Activated CD8-positive, alpha-beta T cell treated with anti-CD3 and anti-CD28 coated beads, Interleukin-2, amount 10 ng/mL, durations not matched to agents 7 days and 5 days (primary cell): ENCODE measurements at regions of chr6 and their contacts with region 1.

Region 1: DNA sequence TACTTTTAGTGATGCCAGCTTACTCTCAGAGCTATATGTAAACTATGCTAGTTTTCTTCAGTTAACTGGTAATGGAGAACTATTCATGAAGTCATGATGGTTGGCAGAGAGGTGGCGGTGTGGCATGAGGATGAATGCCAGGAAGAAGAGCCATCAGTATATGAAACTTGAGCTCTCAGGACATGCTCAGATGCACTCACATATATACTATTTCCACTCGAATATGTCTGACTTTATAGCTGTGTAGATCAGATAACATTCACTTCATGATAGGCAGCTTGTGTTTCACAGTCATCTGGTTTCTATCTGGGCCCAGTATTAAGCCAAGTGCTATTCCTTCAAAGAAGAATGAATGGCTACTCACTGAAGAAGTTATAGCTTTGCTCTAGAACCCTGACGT is 46.2 kb upstream of the CEP85L start:
- DNase-seq: no peak
- ATAC-seq: no peak
- H3K4me3 Mint-ChIP-seq: no peak overlapping the region
- H3K27ac Mint-ChIP-seq: no peak overlapping the region
- H3K4me1 Mint-ChIP-seq: peaks cover 41% of the 10 kb centered on the region
- H3K27me3 Mint-ChIP-seq: no peaks in the 10 kb centered on the region

Region 2: GRCh38 chr6:118377711-118378414 is 319.7 kb before region 1 on chr6:
- CTCF ChIA-PET with region 1: no interaction called
- POLR2A ChIA-PET with region 1: no interaction called
- DNase-seq: no peak
- ATAC-seq: no peak
- H3K4me3 Mint-ChIP-seq: no peak overlapping the region
- H3K27ac Mint-ChIP-seq: no peak overlapping the region
- H3K4me1 Mint-ChIP-seq: no peaks in the 10 kb centered on the region
- H3K27me3 Mint-ChIP-seq: no peaks in the 10 kb centered on the region

Region 3: GRCh38 chr6:118618679-118619377 is 78.7 kb before region 1 on chr6:
- CTCF ChIA-PET with region 1: no interaction called
- POLR2A ChIA-PET with region 1: no interaction called
- DNase-seq: peak; percentile 67
- ATAC-seq: peak; percentile 84
- H3K4me3 Mint-ChIP-seq: no peak overlapping the region
- H3K27ac Mint-ChIP-seq: no peak overlapping the region
- H3K4me1 Mint-ChIP-seq: peaks cover 12% of the 10 kb centered on the region
- H3K27me3 Mint-ChIP-seq: no peaks in the 10 kb centered on the region

Region 4: DNA sequence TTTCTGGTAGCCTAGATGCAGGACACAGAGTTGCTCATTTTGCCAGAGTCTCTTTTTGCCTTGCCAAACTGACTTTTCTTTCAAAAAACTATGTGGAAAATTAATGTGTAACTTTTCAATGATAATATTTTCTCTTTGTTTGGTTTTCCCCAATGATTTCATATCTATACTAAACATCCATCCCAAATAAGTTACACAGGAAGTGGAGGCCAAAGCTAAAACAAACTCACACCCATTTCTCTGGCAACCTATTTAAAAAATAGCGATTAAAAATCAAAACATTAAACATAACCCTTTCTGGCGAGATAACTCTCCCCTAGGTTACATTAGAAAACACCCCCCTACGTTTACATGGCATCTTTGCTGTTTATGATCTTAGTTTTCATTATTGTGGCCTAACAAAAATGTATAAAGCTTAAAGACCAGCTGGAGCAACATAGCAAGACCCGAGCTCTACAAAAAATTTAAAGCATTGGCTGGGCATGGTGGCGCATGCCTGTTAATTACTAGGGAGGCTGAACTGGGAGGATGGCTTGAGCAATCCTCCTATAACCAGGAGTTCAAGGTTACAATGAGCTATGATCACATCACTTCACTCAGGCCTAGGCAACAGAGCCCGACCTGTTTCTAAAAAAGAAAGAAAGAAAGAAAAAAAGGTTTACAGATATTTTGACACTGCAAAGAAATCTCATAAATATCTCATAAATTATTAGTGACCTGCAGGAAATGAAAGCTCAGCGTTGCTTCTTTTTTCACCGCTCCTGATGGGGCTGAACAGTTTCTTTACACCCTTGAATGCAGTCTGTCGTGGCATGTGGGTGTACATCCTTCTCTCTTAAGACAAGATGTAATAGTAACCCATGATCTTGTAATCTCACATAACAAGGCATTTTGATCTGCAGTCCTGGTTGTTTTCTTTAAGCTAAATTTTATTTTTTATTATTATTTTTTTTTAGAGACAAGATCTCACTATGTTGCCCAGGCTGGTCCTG is 13.4 kb before region 1 on chr6:
- CTCF ChIA-PET with region 1: interaction called, 19 read pairs
- POLR2A ChIA-PET with region 1: interaction called, 5 read pairs
- DNase-seq: no peak
- ATAC-seq: no peak
- H3K4me3 Mint-ChIP-seq: no peak overlapping the region
- H3K27ac Mint-ChIP-seq: no peak overlapping the region
- H3K4me1 Mint-ChIP-seq: peaks cover 59% of the 10 kb centered on the region
- H3K27me3 Mint-ChIP-seq: no peaks in the 10 kb centered on the region

Region 5: GRCh38 chr6:118718903-118719302 is 21.3 kb after region 1 on chr6:
- CTCF ChIA-PET with region 1: no interaction called
- POLR2A ChIA-PET with region 1: no interaction called
- DNase-seq: no peak
- ATAC-seq: no peak
- H3K4me3 Mint-ChIP-seq: no peak overlapping the region
- H3K27ac Mint-ChIP-seq: peak overlapping the region; percentile 87
- H3K4me1 Mint-ChIP-seq: peaks cover 50% of the 10 kb centered on the region
- H3K27me3 Mint-ChIP-seq: no peaks in the 10 kb centered on the region